ENCODE measurements at regions of chr6 and their contacts with region 1.

Region 1: DNA sequence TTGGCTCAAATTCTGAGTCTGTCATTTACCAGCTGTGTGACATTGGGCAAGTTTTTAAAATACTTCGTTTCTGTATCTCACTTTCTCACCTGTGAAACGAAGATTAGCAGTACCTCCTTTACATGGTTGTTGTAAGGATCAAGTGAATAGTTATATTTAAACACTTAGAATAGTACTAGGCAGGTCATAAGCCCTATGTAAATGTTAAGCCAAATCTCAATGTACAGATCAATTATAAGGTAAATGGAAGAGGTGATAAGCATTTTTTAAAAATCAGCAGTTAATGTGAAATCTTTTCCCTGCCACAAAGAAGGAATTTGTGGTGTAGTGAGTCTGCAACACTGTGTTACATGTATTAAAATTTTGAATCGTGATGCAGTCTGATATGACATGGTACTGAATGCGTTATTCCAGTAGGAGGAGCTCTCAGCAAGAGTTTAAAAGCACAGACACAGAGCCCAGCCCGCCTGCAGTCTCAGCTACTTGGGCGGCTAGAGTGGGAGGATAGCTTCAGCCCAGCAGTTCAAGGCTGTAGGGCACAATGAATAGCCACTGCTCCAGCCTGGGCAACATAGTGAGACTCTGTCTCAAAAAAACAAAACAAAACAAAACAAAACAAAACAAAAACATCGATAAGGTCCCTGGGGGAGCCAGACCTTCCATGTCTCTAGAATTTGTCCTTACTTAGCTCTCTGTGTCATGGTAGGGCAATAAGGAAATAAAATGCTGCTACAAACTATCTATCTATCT is 46.0 kb downstream of the GTF2H5 start:
- DNase-seq: peak; percentile 76
- ATAC-seq: peak; percentile 90
- H3K4me3 ChIP-seq: no peak overlapping the region
- H3K4me3 Mint-ChIP-seq: no peak overlapping the region
- H3K27ac ChIP-seq: no peak overlapping the region
- H3K27ac Mint-ChIP-seq: no peak overlapping the region
- H3K4me1 ChIP-seq: no peaks in the 10 kb centered on the region
- H3K4me1 Mint-ChIP-seq: no peaks in the 10 kb centered on the region
- H3K27me3 ChIP-seq: no peaks in the 10 kb centered on the region
- H3K27me3 Mint-ChIP-seq: peaks cover 5% of the 10 kb centered on the region
- CTCF ChIP-seq: peak; percentile 82

Region 2: DNA sequence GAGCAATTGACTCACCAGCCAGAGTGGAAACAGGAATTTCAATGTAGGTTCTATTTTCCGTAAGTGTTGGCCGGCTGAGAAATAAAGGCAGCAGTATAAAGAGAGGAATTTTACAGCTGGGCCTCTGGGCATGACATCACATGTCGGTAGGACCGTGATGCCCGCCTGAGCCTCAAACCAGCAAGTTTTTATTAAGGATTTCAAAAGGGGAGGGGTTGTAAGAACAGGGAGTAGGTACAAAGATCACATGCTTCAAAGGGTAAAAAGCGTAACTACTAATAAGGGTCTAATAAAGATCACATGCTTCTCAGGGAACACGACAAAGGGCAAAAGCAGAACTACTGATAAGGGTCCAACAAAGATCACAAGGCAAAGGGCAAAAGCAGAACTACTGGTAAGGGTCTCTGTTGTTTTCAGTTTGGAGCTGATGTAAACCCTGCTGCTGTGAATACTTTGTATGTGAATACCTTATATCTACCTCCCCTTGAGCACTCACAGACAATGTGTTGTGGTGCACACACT is 89.2 kb after region 1 on chr6:
- CTCF ChIA-PET with region 1: no interaction called
- POLR2A ChIA-PET with region 1: no interaction called
- intact Hi-C with region 1: no loop called
- DNase-seq: no peak
- ATAC-seq: no peak
- H3K4me3 ChIP-seq: no peak overlapping the region
- H3K4me3 Mint-ChIP-seq: no peak overlapping the region
- H3K27ac ChIP-seq: no peak overlapping the region
- H3K27ac Mint-ChIP-seq: no peak overlapping the region
- H3K4me1 ChIP-seq: peaks cover 0 to 3% of the 10 kb centered on the region in 2 donors
- H3K4me1 Mint-ChIP-seq: peaks cover 12% of the 10 kb centered on the region
- H3K27me3 ChIP-seq: no peaks in the 10 kb centered on the region
- H3K27me3 Mint-ChIP-seq: no peaks in the 10 kb centered on the region
- CTCF ChIP-seq: no peak

Region 3: GRCh38 chr6:158313989-158314388 is 99.9 kb after region 1 on chr6:
- CTCF ChIA-PET with region 1: no interaction called
- POLR2A ChIA-PET with region 1: no interaction called
- intact Hi-C with region 1: no loop called
- DNase-seq: peak; percentile 42
- ATAC-seq: peak; percentile 51
- H3K4me3 ChIP-seq: peak overlapping the region in 4 of 5 experiments; percentile 24 to 57 (median 46)
- H3K4me3 Mint-ChIP-seq: peak overlapping the region; percentile 86
- H3K27ac ChIP-seq: peak overlapping the region in 1 of 2 donors; percentile 41
- H3K27ac Mint-ChIP-seq: peak overlapping the region; percentile 78
- H3K4me1 ChIP-seq: peaks cover 16 to 17% of the 10 kb centered on the region in 2 donors
- H3K4me1 Mint-ChIP-seq: peaks cover 49% of the 10 kb centered on the region
- H3K27me3 ChIP-seq: no peaks in the 10 kb centered on the region
- H3K27me3 Mint-ChIP-seq: no peaks in the 10 kb centered on the region
- CTCF ChIP-seq: no peak

Region 4: GRCh38 chr6:158387036-158387435 is 172.9 kb after region 1 on chr6:
- CTCF ChIA-PET with region 1: interaction called, 88 read pairs
- POLR2A ChIA-PET with region 1: no interaction called
- intact Hi-C with region 1: no loop called
- DNase-seq: peak; percentile 54
- ATAC-seq: peak; percentile 43
- H3K4me3 ChIP-seq: no peak overlapping the region
- H3K4me3 Mint-ChIP-seq: no peak overlapping the region
- H3K27ac ChIP-seq: no peak overlapping the region
- H3K27ac Mint-ChIP-seq: no peak overlapping the region
- H3K4me1 ChIP-seq: no peaks in the 10 kb centered on the region
- H3K4me1 Mint-ChIP-seq: peaks cover 8% of the 10 kb centered on the region
- H3K27me3 ChIP-seq: no peaks in the 10 kb centered on the region
- H3K27me3 Mint-ChIP-seq: no peaks in the 10 kb centered on the region
- CTCF ChIP-seq: peak; percentile 45

Region 5: DNA sequence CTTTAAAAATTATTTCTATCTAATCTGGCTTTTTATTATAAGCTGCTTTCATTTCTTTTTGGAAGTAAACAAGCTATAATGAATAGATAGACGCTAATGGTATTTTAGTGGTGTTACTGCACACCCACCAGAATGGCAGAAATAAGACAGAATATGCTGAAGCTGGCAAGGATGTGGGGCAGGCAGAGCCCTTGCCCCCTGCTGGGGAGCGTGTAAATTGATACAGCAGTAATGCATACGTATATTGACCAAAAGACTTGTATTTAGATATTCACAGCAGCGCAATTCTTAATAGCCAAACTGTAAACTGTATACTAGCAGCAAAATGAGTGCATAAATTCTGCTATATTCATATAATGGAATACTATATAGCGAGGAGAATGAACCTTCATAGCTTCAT is 381.1 kb after region 1 on chr6:
- CTCF ChIA-PET with region 1: interaction called, 12 read pairs
- POLR2A ChIA-PET with region 1: no interaction called
- intact Hi-C with region 1: no loop called
- DNase-seq: peak; percentile 24
- ATAC-seq: no peak
- H3K4me3 ChIP-seq: no peak overlapping the region
- H3K4me3 Mint-ChIP-seq: no peak overlapping the region
- H3K27ac ChIP-seq: no peak overlapping the region
- H3K27ac Mint-ChIP-seq: no peak overlapping the region
- H3K4me1 ChIP-seq: peaks cover 0 to 14% of the 10 kb centered on the region in 2 donors
- H3K4me1 Mint-ChIP-seq: peaks cover 14% of the 10 kb centered on the region
- H3K27me3 ChIP-seq: no peaks in the 10 kb centered on the region
- H3K27me3 Mint-ChIP-seq: no peaks in the 10 kb centered on the region
- CTCF ChIP-seq: peak; percentile 22

Region 6: GRCh38 chr6:158605266-158605878 is 391.3 kb after region 1 on chr6:
- CTCF ChIA-PET with region 1: interaction called, 86 read pairs
- POLR2A ChIA-PET with region 1: no interaction called
- intact Hi-C with region 1: loop called (anchors 1 kb)
- DNase-seq: peak; percentile 68
- ATAC-seq: peak; percentile 49
- H3K4me3 ChIP-seq: no peak overlapping the region
- H3K4me3 Mint-ChIP-seq: no peak overlapping the region
- H3K27ac ChIP-seq: no peak overlapping the region
- H3K27ac Mint-ChIP-seq: no peak overlapping the region
- H3K4me1 ChIP-seq: no peaks in the 10 kb centered on the region
- H3K4me1 Mint-ChIP-seq: no peaks in the 10 kb centered on the region
- H3K27me3 ChIP-seq: no peaks in the 10 kb centered on the region
- H3K27me3 Mint-ChIP-seq: no peaks in the 10 kb centered on the region
- CTCF ChIP-seq: peak; percentile 79

Region 7: DNA sequence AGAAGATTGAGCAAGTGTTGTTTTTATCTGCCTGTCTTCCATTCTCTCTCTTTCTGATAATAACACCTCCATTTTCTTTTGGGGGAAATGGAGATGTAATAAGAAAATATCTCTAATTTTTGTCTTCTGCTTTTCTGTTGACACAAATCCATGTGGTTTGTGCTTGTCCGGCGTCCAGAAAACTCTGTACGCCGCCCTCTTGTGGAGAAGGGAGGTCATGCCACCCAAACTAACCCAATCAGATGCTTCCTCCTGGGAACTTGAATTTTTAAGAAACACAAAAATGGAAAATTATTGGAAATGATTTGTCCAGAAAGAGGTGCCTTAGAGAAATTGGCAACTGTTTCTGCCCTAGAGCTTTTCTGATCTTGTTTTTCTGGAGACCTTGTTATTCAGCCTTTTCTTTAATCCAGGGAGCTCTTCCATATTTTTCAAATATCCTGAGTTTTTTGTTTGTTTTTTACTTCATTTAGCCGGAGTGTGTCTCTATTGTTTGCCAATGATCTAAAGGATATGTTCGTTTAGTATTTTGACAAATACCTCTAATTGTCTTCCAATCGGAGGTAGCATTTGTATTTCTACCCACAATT is 937.3 kb after region 1 on chr6:
- CTCF ChIA-PET with region 1: no interaction called
- POLR2A ChIA-PET with region 1: no interaction called
- intact Hi-C with region 1: loop called (anchors 10 kb)
- DNase-seq: peak; percentile 74
- ATAC-seq: peak; percentile 79
- H3K4me3 ChIP-seq: no peak overlapping the region
- H3K4me3 Mint-ChIP-seq: no peak overlapping the region
- H3K27ac ChIP-seq: no peak overlapping the region
- H3K27ac Mint-ChIP-seq: no peak overlapping the region
- H3K4me1 ChIP-seq: peaks cover 3 to 4% of the 10 kb centered on the region in 2 donors
- H3K4me1 Mint-ChIP-seq: peaks cover 3% of the 10 kb centered on the region
- H3K27me3 ChIP-seq: no peaks in the 10 kb centered on the region
- H3K27me3 Mint-ChIP-seq: peaks cover 3% of the 10 kb centered on the region
- CTCF ChIP-seq: peak; percentile 94